ENCODE measurements at regions of chr16 and their contacts with region 1.

Region 1: DNA sequence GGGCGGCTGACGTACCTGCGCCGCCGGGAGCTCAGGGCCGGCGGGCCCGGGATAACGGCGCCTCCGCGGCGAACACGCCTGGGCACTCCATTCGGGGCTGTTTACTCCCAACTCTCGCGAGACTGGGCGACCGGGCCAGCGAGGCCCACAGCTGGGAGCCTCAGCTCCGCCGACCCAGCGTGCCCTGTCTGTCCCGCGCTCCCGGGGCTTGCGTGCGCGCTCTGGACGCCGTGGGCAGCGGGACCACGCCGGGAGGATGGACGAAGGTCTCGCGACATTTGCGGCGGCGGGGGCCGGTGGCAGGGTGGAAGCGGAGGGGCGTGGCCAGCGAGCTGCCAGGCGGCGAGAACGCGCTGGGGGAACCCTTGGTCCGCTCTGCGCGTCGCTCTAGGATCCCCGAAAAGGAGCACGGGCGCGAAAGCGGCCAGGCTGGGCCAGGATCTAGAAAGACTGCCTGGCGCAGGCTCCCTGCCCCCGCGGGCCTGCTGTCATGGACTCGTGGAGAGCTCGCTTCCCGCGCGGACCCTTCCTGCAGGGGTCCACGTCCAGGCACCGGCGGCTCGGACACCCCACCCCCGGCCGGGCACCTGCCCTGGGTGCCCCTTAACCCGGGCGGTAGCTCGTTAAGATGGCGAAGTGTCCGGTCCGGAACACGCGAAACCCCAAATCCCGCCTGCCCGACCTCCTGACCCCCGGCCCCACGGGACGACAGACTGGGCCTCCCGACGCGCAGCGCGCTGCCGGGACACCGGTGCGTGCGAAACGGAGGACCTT is at the start of gene MBTPS1:
- DNase-seq: peak; percentile 98
- H3K4me3 Mint-ChIP-seq: peak within 1 kb of the TSS; percentile 90
- H3K27ac Mint-ChIP-seq: peak within 1 kb of the TSS; percentile 90
- H3K4me1 Mint-ChIP-seq: peaks cover 14% of the 10 kb centered on the region
- H3K27me3 Mint-ChIP-seq: no peaks in the 10 kb centered on the region
- total RNA-seq, gene MBTPS1: 54.5 and 58.1 TPM in 2 replicates

Region 2: GRCh38 chr16:84098936-84099335 is 18.0 kb before region 1 on chr16:
- intact Hi-C with region 1: loop called (anchors 2 kb)
- DNase-seq: no peak
- H3K4me3 Mint-ChIP-seq: no peak overlapping the region
- H3K27ac Mint-ChIP-seq: no peak overlapping the region
- H3K4me1 Mint-ChIP-seq: peaks cover 19% of the 10 kb centered on the region
- H3K27me3 Mint-ChIP-seq: no peaks in the 10 kb centered on the region

Region 3: GRCh38 chr16:84138824-84139627 is 22.1 kb after region 1 on chr16:
- intact Hi-C with region 1: loop called (anchors 1 kb)
- DNase-seq: no peak
- H3K4me3 Mint-ChIP-seq: peak overlapping the region; percentile 71
- H3K27ac Mint-ChIP-seq: peak overlapping the region; percentile 89
- H3K4me1 Mint-ChIP-seq: peaks cover 45% of the 10 kb centered on the region
- H3K27me3 Mint-ChIP-seq: no peaks in the 10 kb centered on the region

Region 4: DNA sequence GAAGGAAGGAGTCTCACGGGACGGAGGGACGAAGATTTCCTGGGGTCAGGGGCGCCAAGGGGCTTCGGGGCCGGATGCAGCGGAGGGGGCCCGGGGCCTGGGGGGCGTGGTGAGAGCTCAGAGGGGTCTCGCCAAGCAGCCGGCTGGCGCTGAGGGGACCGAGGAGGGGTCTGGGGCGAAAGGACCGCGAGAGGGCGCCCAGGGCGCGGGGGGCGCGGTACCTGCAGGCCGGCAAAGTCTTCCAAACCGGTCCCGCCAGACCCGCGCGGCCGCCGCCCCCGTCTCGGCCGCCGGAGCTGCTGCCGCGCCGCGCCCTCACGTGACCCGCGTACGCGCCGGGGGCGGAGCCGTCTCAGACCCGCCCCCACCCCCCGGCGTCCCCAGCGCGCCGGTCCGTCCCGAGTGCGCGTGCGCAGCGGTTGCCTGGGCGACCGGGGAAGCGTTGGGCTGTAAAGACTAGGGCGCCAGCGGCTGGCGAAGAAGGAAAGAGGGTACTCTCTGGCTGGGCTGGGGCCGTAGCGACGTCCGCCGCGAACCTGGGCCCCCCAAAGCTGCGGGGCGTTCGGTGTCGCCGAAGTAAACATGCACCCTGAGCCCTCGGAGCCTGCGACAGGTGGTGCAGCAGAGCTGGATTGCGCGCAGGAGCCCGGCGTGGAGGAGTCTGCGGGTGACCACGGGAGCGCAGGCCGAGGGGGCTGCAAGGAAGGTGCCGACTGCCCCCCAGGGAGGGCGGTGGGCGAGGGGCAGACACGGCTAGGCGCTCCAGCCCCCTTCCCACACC is 28.1 kb after region 1 on chr16 and contains the starts of genes DNAAF1 and HSDL1:
- intact Hi-C with region 1: loop called (anchors 1 kb)
- DNase-seq: peak; percentile 89
- H3K4me3 Mint-ChIP-seq: peak within 1 kb of the TSS; percentile 91
- H3K27ac Mint-ChIP-seq: peak within 1 kb of the TSS; percentile 74
- H3K4me1 Mint-ChIP-seq: peaks cover 12% of the 10 kb centered on the region
- H3K27me3 Mint-ChIP-seq: peaks cover 10% of the 10 kb centered on the region
- total RNA-seq, gene DNAAF1: 0.09 TPM in 1 of 2 replicates, not detected in the other
- total RNA-seq, gene HSDL1: 16.7 and 19.9 TPM in 2 replicates

Region 5: DNA sequence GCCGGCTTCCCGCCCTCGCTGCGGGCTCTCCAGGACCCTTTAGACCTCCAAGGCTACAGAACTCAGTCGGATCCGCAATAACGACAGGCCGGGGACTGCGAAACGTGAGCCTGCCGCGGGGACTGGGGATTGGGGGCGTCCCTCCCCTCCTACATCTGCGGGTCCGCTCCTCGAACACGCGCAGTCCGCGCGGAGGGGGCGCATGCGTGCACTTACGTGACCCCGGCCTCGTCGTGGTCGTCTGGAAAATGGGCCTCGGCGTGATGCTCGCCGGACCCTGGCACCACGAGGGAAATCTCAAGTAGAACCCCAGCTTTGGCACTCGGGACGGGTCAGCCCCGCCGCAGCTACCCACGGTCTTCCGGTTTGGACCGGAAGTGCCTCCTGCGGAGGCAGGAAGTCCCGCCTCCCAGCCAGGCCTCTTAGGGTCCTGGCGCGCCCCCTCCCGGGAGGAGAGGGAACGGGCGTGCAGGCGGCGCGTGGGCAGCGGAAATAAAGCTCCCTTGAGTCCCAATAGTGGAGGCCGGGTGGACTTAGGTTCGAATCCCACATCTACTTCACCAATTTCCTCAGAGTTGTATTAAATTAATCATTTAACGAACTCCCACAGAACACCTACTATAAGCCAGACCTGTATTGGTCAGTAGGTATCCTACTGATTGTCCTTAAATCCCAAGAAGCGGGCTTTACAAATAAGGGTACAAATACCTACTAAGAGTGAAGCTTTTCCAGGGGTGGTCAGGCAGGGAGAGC is 70.0 kb after region 1 on chr16 and contains the start of gene TAF1C:
- intact Hi-C with region 1: loop called (anchors 2 kb)
- DNase-seq: peak; percentile 83
- H3K4me3 Mint-ChIP-seq: peak within 1 kb of the TSS; percentile 93
- H3K27ac Mint-ChIP-seq: peak within 1 kb of the TSS; percentile 84
- H3K4me1 Mint-ChIP-seq: peaks cover 11% of the 10 kb centered on the region
- H3K27me3 Mint-ChIP-seq: no peaks in the 10 kb centered on the region
- total RNA-seq, gene TAF1C: 57.5 and 64.4 TPM in 2 replicates